ENCODE measurements at regions of chr7 and their contacts with region 1.

Region 1: DNA sequence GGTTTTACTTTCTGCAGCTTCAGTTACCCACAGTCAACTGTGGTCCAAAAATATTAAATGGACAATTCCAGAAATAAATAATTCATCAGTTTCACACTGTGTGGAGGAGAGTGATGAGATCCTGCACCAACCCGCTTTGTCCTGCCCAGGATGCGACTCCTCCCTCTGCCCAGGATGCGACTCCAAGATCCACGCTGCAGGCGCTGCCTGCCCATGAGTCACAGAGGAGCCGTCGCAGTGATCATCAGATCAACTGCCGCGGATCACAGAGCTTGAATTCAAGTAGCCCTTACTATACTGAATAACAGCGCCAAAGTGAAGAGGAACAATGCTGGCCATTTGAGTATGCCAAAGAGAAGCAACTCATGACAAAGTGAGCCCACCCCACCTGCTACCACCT is 61.5 kb downstream of the GRB10 start:
- DNase-seq: no peak
- ATAC-seq: no peak
- H3K4me3 ChIP-seq: no peak overlapping the region
- H3K4me3 Mint-ChIP-seq: no peak overlapping the region
- H3K27ac ChIP-seq: no peak overlapping the region
- H3K27ac Mint-ChIP-seq: no peak overlapping the region
- H3K4me1 ChIP-seq: peaks cover 9% of the 10 kb centered on the region
- H3K4me1 Mint-ChIP-seq: peaks cover 15% of the 10 kb centered on the region
- H3K27me3 ChIP-seq: no peaks in the 10 kb centered on the region
- H3K27me3 Mint-ChIP-seq: no peaks in the 10 kb centered on the region
- CTCF ChIP-seq: no peak

Region 2: GRCh38 chr7:50687575-50688225 is 33.5 kb before region 1 on chr7:
- CTCF ChIA-PET with region 1: no interaction called
- POLR2A ChIA-PET with region 1: no interaction called
- intact Hi-C with region 1: loop called in 1 of 2 experiments (anchors 1 kb)
- DNase-seq: no peak
- ATAC-seq: no peak
- H3K4me3 ChIP-seq: no peak overlapping the region
- H3K4me3 Mint-ChIP-seq: no peak overlapping the region
- H3K27ac ChIP-seq: no peak overlapping the region
- H3K27ac Mint-ChIP-seq: no peak overlapping the region
- H3K4me1 ChIP-seq: no peaks in the 10 kb centered on the region
- H3K4me1 Mint-ChIP-seq: no peaks in the 10 kb centered on the region
- H3K27me3 ChIP-seq: no peaks in the 10 kb centered on the region
- H3K27me3 Mint-ChIP-seq: peaks cover 7% of the 10 kb centered on the region
- CTCF ChIP-seq: no peak

Region 3: GRCh38 chr7:50761713-50762112 is 40.5 kb after region 1 on chr7:
- CTCF ChIA-PET with region 1: no interaction called
- POLR2A ChIA-PET with region 1: no interaction called
- intact Hi-C with region 1: loop called in 1 of 2 experiments (anchors 5 kb)
- DNase-seq: peak in 1 of 9 experiments; percentile 12
- ATAC-seq: no peak
- H3K4me3 ChIP-seq: no peak overlapping the region
- H3K4me3 Mint-ChIP-seq: peak overlapping the region; percentile 27
- H3K27ac ChIP-seq: no peak overlapping the region
- H3K27ac Mint-ChIP-seq: peak overlapping the region; percentile 65
- H3K4me1 ChIP-seq: peaks cover 11% of the 10 kb centered on the region
- H3K4me1 Mint-ChIP-seq: peaks cover 20% of the 10 kb centered on the region
- H3K27me3 ChIP-seq: peaks cover 0 to 2% of the 10 kb centered on the region in 2 experiments
- H3K27me3 Mint-ChIP-seq: no peaks in the 10 kb centered on the region
- CTCF ChIP-seq: no peak

Measured in CD8-positive, alpha-beta T cell (primary cell).